ENCODE measurements at regions of chr17 and their contacts with region 1.

Region 1: GRCh38 chr17:50026901-50027630 is 28.8 kb upstream of the ITGA3 start:
- DNase-seq: peak; percentile 76 to 96 (median 92)
- ATAC-seq: peak; percentile 96
- H3K4me3 ChIP-seq: no peak overlapping the region
- H3K4me1 ChIP-seq: no peaks in the 10 kb centered on the region
- CTCF ChIP-seq: peak; percentile 92

Region 2: GRCh38 chr17:49959183-49959935 is 67.7 kb before region 1 on chr17:
- intact Hi-C with region 1: no loop called
- DNase-seq: no peak
- ATAC-seq: no peak
- H3K4me3 ChIP-seq: no peak overlapping the region
- H3K4me1 ChIP-seq: no peaks in the 10 kb centered on the region
- CTCF ChIP-seq: no peak

Region 3: GRCh38 chr17:49987681-49988441 is 39.2 kb before region 1 on chr17:
- intact Hi-C with region 1: no loop called
- DNase-seq: no peak
- ATAC-seq: peak; percentile 49
- H3K4me3 ChIP-seq: no peak overlapping the region
- H3K4me1 ChIP-seq: no peaks in the 10 kb centered on the region
- CTCF ChIP-seq: no peak

Region 4: GRCh38 chr17:50087246-50087911 is 60.3 kb after region 1 on chr17:
- intact Hi-C with region 1: loop called (anchors 2 to 5 kb)
- DNase-seq: peak; percentile 74 to 86 (median 76)
- ATAC-seq: peak; percentile 92
- H3K4me3 ChIP-seq: no peak overlapping the region
- H3K4me1 ChIP-seq: no peaks in the 10 kb centered on the region
- CTCF ChIP-seq: peak; percentile 96

Measured in mucosa of descending colon (tissue), 3 donors.